Breast epithelium (tissue), 4 donors: ENCODE measurements at regions of chr6 and their contacts with region 1.

Region 1: GRCh38 chr6:79463669-79464068 is 73.6 kb downstream of the LCA5 start:
- DNase-seq: no peak
- H3K4me3 ChIP-seq: no peak overlapping the region
- H3K27ac ChIP-seq: no peak overlapping the region
- H3K4me1 ChIP-seq: peaks cover 0 to 8% of the 10 kb centered on the region in 2 donors
- H3K27me3 ChIP-seq: no peaks in the 10 kb centered on the region
- CTCF ChIP-seq: no peak
- POLR2A ChIP-seq: no peak

Region 2: GRCh38 chr6:78844899-78845298 is 618.8 kb before region 1 on chr6:
- intact Hi-C with region 1: no loop called
- DNase-seq: no peak
- H3K4me3 ChIP-seq: no peak overlapping the region
- H3K27ac ChIP-seq: no peak overlapping the region
- H3K4me1 ChIP-seq: no peaks in the 10 kb centered on the region
- H3K27me3 ChIP-seq: no peaks in the 10 kb centered on the region
- CTCF ChIP-seq: no peak
- POLR2A ChIP-seq: no peak

Region 3: GRCh38 chr6:79399499-79399898 is 64.2 kb before region 1 on chr6:
- intact Hi-C with region 1: loop called (anchors 2 kb)
- DNase-seq: no peak
- H3K4me3 ChIP-seq: no peak overlapping the region
- H3K27ac ChIP-seq: no peak overlapping the region
- H3K4me1 ChIP-seq: no peaks in the 10 kb centered on the region
- H3K27me3 ChIP-seq: no peaks in the 10 kb centered on the region
- CTCF ChIP-seq: no peak
- POLR2A ChIP-seq: no peak

Region 4: DNA sequence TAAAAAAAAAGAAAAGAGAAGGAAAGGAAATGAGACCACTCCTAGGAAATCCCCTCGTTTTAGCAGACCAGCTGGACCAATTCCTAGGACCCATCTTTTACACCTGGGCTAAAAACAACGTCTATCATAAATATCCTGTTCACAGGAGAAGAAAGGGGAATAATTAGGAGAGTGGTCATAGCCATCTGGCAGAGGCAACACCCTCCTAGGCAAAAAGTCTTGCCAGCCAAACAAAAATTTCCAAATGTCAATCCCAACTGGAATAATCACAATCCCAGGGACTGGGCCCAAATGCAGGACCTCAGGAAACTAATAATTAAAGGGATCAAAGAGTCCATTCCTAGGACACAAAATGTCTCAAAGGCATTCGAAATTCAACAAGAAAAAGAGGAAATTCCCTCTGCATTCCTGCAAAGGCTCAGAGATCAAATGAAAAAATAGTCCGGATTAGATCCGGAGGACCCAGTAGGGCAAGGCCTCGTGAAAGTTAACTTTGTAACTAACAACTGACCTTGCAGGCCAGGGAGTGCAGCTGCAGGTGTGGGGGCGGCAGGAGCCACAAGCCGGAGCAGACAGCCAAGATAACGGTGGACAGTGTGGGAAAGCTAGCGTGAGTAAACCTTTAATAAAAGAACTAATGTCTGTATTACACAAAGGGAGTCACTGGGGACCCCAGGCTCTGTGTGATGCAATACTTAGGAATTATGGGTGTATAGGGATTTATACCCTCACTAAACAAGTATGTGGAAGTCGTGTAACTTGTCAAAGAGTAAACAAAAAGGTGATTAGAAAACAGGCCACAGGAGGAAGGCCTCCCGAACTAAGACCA is 61.8 kb after region 1 on chr6:
- intact Hi-C with region 1: no loop called
- DNase-seq: no peak
- H3K4me3 ChIP-seq: peak overlapping the region in 1 of 3 donors; percentile 24
- H3K27ac ChIP-seq: peak overlapping the region; percentile 41 to 58
- H3K4me1 ChIP-seq: no peaks in the 10 kb centered on the region
- H3K27me3 ChIP-seq: no peaks in the 10 kb centered on the region
- CTCF ChIP-seq: no peak
- POLR2A ChIP-seq: no peak